Activated CD8-positive, alpha-beta T cell treated with anti-CD3 and anti-CD28 coated beads for 36 hours (primary cell): ENCODE measurements at regions of chr1 and their contacts with region 1.

Region 1: DNA sequence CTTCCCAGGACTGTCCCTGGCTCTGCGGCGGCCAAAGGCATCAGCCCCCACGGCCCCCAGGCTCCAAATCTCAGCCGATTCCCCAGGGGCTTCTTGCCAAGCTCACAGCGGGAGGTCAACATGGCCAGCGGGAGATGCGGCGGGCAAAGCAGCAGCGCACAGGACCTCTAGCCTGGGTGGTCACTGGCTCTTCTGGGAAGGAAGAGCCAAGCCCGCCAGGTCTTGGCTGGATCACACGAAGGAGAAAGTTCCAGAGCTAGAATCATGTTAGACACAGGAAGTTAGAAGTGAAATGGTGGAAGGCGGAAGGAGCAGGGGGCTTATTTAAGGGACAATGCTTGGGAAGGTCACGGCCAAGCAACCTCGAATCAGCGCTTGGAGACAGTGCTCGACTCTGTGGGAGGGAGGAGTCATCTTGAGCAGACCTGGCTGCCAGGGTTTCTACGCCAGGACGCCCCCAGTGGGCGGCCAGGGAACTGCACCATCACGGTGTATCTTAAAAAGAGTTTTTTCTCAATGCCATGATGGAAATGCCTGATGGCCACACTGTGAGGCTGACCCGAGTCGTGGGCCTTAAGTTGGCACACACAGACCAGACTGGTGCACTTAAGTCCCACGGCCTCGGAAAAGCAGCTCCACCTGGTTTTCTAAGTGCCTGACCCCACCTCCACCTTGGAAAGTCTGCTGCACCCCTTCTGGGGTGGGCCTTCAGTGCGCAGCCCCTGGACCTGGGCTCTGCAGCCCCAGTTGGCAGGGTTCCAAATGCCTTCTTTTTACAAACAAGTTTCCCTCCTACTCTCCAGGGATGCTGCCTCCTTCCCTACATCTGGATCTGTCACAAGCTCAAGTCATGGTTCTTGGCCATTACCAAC is 29.3 kb downstream of the SLC66A1 start:
- DNase-seq: peak; percentile 88
- ATAC-seq: peak; percentile 86
- H3K4me3 Mint-ChIP-seq: no peak overlapping the region
- H3K27ac Mint-ChIP-seq: peak overlapping the region; percentile 57
- H3K4me1 Mint-ChIP-seq: peaks cover 15% of the 10 kb centered on the region
- H3K27me3 Mint-ChIP-seq: no peaks in the 10 kb centered on the region
- CTCF ChIP-seq: peak; percentile 92

Region 2: GRCh38 chr1:18693256-18694098 is 648.0 kb before region 1 on chr1:
- CTCF ChIA-PET with region 1: no interaction called
- POLR2A ChIA-PET with region 1: no interaction called
- intact Hi-C with region 1: no loop called
- DNase-seq: no peak
- ATAC-seq: no peak
- H3K4me3 Mint-ChIP-seq: no peak overlapping the region
- H3K27ac Mint-ChIP-seq: no peak overlapping the region
- H3K4me1 Mint-ChIP-seq: no peaks in the 10 kb centered on the region
- H3K27me3 Mint-ChIP-seq: peaks cover 26% of the 10 kb centered on the region
- CTCF ChIP-seq: no peak

Region 3: GRCh38 chr1:19284896-19285295 is 56.5 kb before region 1 on chr1:
- CTCF ChIA-PET with region 1: no interaction called
- POLR2A ChIA-PET with region 1: no interaction called
- intact Hi-C with region 1: no loop called
- DNase-seq: no peak
- ATAC-seq: no peak
- H3K4me3 Mint-ChIP-seq: no peak overlapping the region
- H3K27ac Mint-ChIP-seq: no peak overlapping the region
- H3K4me1 Mint-ChIP-seq: peaks cover 3% of the 10 kb centered on the region
- H3K27me3 Mint-ChIP-seq: peaks cover 14% of the 10 kb centered on the region
- CTCF ChIP-seq: no peak

Region 4: GRCh38 chr1:19353596-19353995 is 12.2 kb after region 1 on chr1:
- CTCF ChIA-PET with region 1: interaction called, 10 read pairs
- POLR2A ChIA-PET with region 1: no interaction called
- intact Hi-C with region 1: no loop called
- DNase-seq: no peak
- ATAC-seq: no peak
- H3K4me3 Mint-ChIP-seq: no peak overlapping the region
- H3K27ac Mint-ChIP-seq: no peak overlapping the region
- H3K4me1 Mint-ChIP-seq: peaks cover under 1% of the 10 kb centered on the region
- H3K27me3 Mint-ChIP-seq: no peaks in the 10 kb centered on the region
- CTCF ChIP-seq: no peak